Mammary epithelial cell (primary cell): ENCODE measurements at regions of chr20 and their contacts with region 1.

Region 1: DNA sequence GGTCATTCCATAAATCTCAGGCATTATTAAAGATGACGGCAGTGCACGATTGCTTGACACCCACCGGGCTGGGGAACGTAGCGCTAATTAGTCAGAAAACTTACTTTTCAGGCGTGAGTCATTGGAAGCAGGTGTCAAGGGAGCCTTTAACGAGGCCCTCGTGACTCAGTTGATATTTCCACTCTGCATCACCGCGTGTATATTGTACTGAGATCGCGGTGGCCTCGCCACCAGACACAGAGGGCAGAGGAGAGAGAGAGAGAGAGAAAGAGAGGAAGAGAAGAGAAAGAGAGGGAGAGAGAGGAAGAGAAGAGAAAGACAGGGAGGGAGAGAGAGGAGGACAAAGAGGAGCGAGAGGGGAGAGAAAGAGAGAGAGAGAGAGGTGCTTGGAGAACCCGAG is 21.1 kb downstream of the KCNG1 start:
- DNase-seq: no peak
- H3K4me3 ChIP-seq: no peak overlapping the region
- H3K27ac ChIP-seq: no peak overlapping the region
- H3K4me1 ChIP-seq: peaks cover 4% of the 10 kb centered on the region
- H3K27me3 ChIP-seq: no peaks in the 10 kb centered on the region
- CTCF ChIP-seq: no peak

Region 2: DNA sequence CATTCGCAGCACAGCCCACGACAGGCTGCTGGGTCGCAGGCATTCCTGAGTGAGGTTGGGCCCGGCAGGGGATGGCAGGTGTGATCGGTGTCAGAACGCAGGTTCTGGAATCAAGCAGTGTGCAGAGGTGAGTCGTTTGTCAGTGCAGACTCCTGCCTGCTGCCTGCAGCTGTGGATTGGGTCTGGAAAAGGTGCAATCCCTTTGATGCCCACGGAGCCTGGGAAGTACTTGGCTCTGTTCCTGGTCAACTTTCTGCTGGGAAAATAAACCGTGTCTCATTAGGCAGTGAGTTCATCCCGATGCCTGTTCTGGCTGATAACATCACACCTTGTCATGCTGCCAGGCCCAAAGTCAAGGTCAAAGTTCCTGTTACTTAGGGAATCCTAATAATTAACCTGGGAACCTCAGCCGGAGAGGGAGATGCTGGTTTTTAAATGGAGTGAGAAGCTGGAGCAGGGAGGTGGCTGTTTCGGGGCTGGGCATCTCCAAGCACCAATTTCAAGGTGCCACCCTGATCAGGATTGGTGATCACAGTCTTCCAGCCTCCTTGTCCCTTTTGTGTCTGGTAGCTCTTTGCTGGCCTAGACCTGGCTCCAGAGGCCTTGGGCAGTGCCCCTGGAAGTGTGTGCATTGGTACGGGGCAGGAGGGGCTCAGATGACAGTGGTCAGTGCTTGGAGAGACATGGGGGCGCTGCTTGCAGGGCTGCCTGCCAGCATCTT is 145.6 kb before region 1 on chr20:
- CTCF ChIA-PET with region 1: no interaction called
- dilution Hi-C with region 1: no loop called
- in situ Hi-C with region 1: no loop called
- intact Hi-C with region 1: no loop called
- DNase-seq: peak; percentile 63
- H3K4me3 ChIP-seq: no peak overlapping the region
- H3K27ac ChIP-seq: no peak overlapping the region
- H3K4me1 ChIP-seq: peaks cover 21% of the 10 kb centered on the region
- H3K27me3 ChIP-seq: no peaks in the 10 kb centered on the region
- CTCF ChIP-seq: no peak

Region 3: DNA sequence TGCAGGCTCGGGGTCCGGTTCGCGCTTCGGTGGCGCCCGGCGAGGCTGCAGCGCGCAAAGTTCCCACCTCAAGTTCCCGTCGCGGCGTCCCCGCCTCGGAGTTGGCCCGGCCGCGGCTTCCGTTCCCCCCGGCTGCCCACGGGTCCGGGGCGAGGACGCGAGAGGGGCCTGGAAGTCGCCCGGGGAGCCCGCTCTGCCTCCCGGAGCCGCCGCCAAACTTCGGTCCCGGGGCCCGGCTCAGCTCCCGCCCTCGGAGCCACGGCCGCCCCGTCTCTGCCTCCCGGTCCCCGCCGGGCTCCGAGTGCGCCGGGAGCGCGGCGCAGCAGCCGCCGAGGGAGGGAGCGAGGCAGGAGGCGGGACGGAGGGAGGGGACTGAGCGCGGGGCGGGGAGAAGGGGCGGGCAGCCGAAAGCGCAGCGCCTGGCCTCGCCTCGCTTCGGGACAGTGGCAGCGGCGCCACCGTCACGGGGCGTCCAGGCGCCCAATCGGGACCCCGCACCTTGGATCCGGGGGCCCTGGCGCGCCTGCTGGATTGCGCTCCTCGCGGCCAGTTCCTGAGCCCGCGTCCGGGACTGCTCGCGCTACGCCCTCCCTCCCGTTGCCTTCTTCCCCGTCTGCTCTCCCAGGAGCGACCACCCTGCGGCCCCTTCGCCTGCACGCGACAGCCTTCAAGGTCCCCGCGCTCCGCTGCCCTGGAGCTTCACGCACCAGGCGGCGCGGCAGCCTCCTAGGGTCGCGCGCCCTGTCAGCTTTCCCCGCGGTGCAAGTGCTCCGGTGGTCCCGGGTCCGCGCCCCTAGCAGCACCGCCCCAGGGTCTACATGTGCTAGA is 21.3 kb after region 1 on chr20 and contains the start of gene KCNG1:
- CTCF ChIA-PET with region 1: no interaction called
- dilution Hi-C with region 1: no loop called
- in situ Hi-C with region 1: no loop called
- intact Hi-C with region 1: no loop called
- DNase-seq: peak; percentile 76
- H3K4me3 ChIP-seq: peak within 1 kb of the TSS; percentile 70 to 83 (median 73)
- H3K27ac ChIP-seq: peak within 1 kb of the TSS; percentile 28
- H3K4me1 ChIP-seq: peaks cover 37% of the 10 kb centered on the region
- H3K27me3 ChIP-seq: peaks cover 5% of the 10 kb centered on the region
- CTCF ChIP-seq: no peak
- total RNA-seq, gene KCNG1: 43.9 to 53.0 TPM

Region 4: DNA sequence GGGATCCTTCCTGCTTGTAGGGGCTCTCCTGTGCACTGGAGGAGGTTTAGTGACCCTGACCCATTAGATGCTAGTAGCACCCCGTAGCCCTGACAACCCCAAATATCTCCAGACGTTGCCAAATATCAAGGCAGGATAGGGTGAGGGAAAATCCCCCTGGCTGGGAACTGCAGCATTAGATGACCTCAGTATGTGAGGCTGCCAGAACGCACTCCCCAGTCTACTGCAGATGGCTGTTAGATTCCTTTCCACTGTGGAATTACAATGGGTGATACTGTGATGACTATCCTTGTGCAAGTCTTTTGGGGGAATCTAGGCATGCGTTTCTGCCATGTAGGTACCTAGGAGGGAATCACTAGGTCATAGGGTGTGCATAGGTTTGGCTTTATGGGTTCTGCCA is 247.5 kb after region 1 on chr20:
- CTCF ChIA-PET with region 1: no interaction called
- dilution Hi-C with region 1: loop called (anchors 10 kb)
- in situ Hi-C with region 1: no loop called
- intact Hi-C with region 1: no loop called
- DNase-seq: no peak
- H3K4me3 ChIP-seq: no peak overlapping the region
- H3K27ac ChIP-seq: no peak overlapping the region
- H3K4me1 ChIP-seq: no peaks in the 10 kb centered on the region
- H3K27me3 ChIP-seq: no peaks in the 10 kb centered on the region
- CTCF ChIP-seq: no peak